H1 (cell line): ENCODE measurements at regions of chr17 and their contacts with region 1.

Region 1: DNA sequence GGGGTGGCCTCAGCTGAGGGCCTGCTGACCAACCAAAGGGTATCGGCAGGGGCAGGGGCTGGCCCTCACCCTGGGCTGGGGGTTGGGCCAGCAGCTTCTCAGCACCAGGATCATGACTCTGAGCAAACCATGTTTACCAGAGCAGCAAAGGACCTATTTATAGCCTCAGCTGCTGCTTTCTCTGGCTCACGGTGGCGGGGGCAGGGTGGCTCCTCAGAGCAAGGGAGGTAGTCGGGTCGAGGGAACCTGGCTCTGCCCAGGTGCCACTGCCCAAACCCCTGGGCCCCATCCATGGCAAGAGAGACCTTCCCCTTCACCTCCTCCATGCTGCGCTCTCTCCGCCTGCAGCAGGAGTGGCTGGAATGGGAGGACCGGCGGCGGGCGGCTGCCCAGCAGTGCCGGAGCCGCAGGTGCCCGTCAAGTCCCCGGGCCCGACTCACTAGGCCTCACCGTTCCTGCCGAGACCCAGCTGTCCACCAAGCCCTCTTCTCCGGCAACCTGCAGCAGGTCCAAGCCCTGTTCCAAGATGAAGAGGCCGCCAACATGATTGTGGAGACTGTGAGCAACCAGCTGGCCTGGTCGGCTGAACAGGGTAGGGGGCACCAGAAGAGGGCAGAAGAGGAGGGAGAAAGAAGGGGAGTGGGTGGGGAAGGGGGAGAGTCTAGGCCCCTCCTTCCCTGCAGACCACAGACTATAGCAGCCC is at the start of gene ASB16:
- DNase-seq: no peak
- H3K4me3 ChIP-seq: peak within 1 kb of the TSS in 2 of 4 experiments; percentile 14 to 16; a peak in 4 of 8 replicates
- H3K27ac ChIP-seq: peak within 1 kb of the TSS; percentile 56; the same call in 1 of the 2 replicates
- H3K4me1 ChIP-seq: peaks cover 0 to 15% (median 8%) of the 10 kb centered on the region in 4 experiments; a peak in 5 of 7 replicates
- H3K27me3 ChIP-seq: no peaks in the 10 kb centered on the region
- CTCF ChIP-seq: peak; percentile 36 to 42 (median 41); a peak in 3 of 4 replicates
- EP300 ChIP-seq: no peak
- POLR2A ChIP-seq: no peak
- RAD21 ChIP-seq: peak; percentile 52 to 58; a peak in 3 of 4 replicates
- total RNA-seq, gene ASB16: 0.19 TPM in 1 of 2 replicates, not detected in the other

Region 2: GRCh38 chr17:44006598-44007345 is 163.9 kb before region 1 on chr17:
- CTCF ChIA-PET with region 1: interaction called, 14 read pairs
- POLR2A ChIA-PET with region 1: no interaction called
- DNase-seq: peak; percentile 94 to 98
- H3K4me3 ChIP-seq: peak overlapping the region; percentile 72 to 86 (median 82)
- H3K27ac ChIP-seq: no peak overlapping the region
- H3K4me1 ChIP-seq: peaks cover 0 to 19% (median 13%) of the 10 kb centered on the region in 4 experiments; a peak in 6 of 7 replicates
- H3K27me3 ChIP-seq: peaks cover 0 to 21% (median 17%) of the 10 kb centered on the region in 4 experiments; a peak in 6 of 7 replicates
- CTCF ChIP-seq: peak; percentile 61 to 78 (median 76)
- EP300 ChIP-seq: no peak
- POLR2A ChIP-seq: no peak; a peak in 1 of 3 replicates
- RAD21 ChIP-seq: peak; percentile 42 to 55; a peak in 3 of 4 replicates

Region 3: GRCh38 chr17:44110823-44111633 is 59.6 kb before region 1 on chr17:
- CTCF ChIA-PET with region 1: interaction called, 61 read pairs
- POLR2A ChIA-PET with region 1: interaction called, 3 read pairs
- DNase-seq: peak; percentile 69 to 86
- H3K4me3 ChIP-seq: peak overlapping the region in 3 of 4 experiments; percentile 1 to 45 (median 15); a peak in 4 of 8 replicates
- H3K27ac ChIP-seq: no peak overlapping the region
- H3K4me1 ChIP-seq: peaks cover 0 to 29% (median 25%) of the 10 kb centered on the region in 4 experiments; a peak in 6 of 7 replicates
- H3K27me3 ChIP-seq: no peaks in the 10 kb centered on the region; a peak in 1 of 7 replicates
- CTCF ChIP-seq: no peak
- EP300 ChIP-seq: no peak
- POLR2A ChIP-seq: peak in 1 of 2 experiments; percentile 60; a peak in 1 of 3 replicates
- RAD21 ChIP-seq: peak in 1 of 2 experiments; percentile 9; a peak in 1 of 4 replicates

Region 4: GRCh38 chr17:44152875-44153274 is 17.8 kb before region 1 on chr17:
- CTCF ChIA-PET with region 1: interaction called, 39 read pairs
- POLR2A ChIA-PET with region 1: interaction called, 11 read pairs
- DNase-seq: no peak
- H3K4me3 ChIP-seq: no peak overlapping the region
- H3K27ac ChIP-seq: no peak overlapping the region
- H3K4me1 ChIP-seq: no peaks in the 10 kb centered on the region
- H3K27me3 ChIP-seq: no peaks in the 10 kb centered on the region
- CTCF ChIP-seq: no peak
- EP300 ChIP-seq: no peak
- POLR2A ChIP-seq: no peak
- RAD21 ChIP-seq: no peak

Region 5: GRCh38 chr17:44186307-44187130 is 15.9 kb after region 1 on chr17 and contains the start of gene TMUB2:
- CTCF ChIA-PET with region 1: interaction called, 36 read pairs
- POLR2A ChIA-PET with region 1: interaction called, 84 read pairs
- DNase-seq: peak; percentile 98 to 99
- H3K4me3 ChIP-seq: peak within 1 kb of the TSS; percentile 93 to 99 (median 98)
- H3K27ac ChIP-seq: peak within 1 kb of the TSS; percentile 91
- H3K4me1 ChIP-seq: peaks cover 0 to 4% (median 0%) of the 10 kb centered on the region in 4 experiments; a peak in 2 of 7 replicates
- H3K27me3 ChIP-seq: no peaks in the 10 kb centered on the region
- CTCF ChIP-seq: 0 out of 4 replicates have a peak, but pooled peaks of 1 of the 3 experiments have one; percentile 0
- EP300 ChIP-seq: no peak
- POLR2A ChIP-seq: peak; percentile 84 to 96
- RAD21 ChIP-seq: no peak
- total RNA-seq, gene TMUB2: 15.7 and 18.5 TPM in 2 replicates

Region 6: GRCh38 chr17:44293509-44294226 is 123.0 kb after region 1 on chr17:
- CTCF ChIA-PET with region 1: no interaction called
- POLR2A ChIA-PET with region 1: no interaction called
- DNase-seq: no peak
- H3K4me3 ChIP-seq: no peak overlapping the region
- H3K27ac ChIP-seq: no peak overlapping the region
- H3K4me1 ChIP-seq: no peaks in the 10 kb centered on the region
- H3K27me3 ChIP-seq: no peaks in the 10 kb centered on the region
- CTCF ChIP-seq: no peak
- EP300 ChIP-seq: no peak
- POLR2A ChIP-seq: no peak
- RAD21 ChIP-seq: no peak

Region 7: DNA sequence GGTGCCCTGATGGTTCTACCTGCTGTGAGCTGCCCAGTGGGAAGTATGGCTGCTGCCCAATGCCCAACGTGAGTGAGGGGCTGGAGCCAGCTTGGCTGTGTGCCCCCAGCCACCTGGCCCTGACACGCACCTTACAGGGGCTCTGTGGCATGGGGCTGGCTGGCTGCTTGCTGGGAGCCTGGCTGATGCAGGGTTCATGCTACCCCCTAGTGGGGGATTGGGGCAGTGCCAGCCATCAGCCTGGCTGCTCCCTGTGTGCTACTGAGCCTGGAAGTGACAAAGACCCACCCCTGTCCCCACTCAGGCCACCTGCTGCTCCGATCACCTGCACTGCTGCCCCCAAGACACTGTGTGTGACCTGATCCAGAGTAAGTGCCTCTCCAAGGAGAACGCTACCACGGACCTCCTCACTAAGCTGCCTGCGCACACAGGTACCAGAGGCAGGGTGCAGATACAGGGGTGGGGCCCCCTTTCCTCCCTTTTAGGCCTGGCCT is 180.1 kb after region 1 on chr17:
- CTCF ChIA-PET with region 1: interaction called, 24 read pairs
- POLR2A ChIA-PET with region 1: interaction called, 4 read pairs
- DNase-seq: peak in 1 of 2 experiments; percentile 90
- H3K4me3 ChIP-seq: no peak overlapping the region
- H3K27ac ChIP-seq: no peak overlapping the region
- H3K4me1 ChIP-seq: peaks cover 0 to 8% (median 4%) of the 10 kb centered on the region in 4 experiments; a peak in 4 of 7 replicates
- H3K27me3 ChIP-seq: no peaks in the 10 kb centered on the region; a peak in 2 of 7 replicates
- CTCF ChIP-seq: peak; percentile 82 to 95 (median 90)
- EP300 ChIP-seq: no peak
- POLR2A ChIP-seq: no peak
- RAD21 ChIP-seq: peak; percentile 81 to 82